ENCODE measurements at regions of chr10 and their contacts with region 1.

Region 1: GRCh38 chr10:93482145-93482834 is at the start of gene MYOF:
- H3K4me3 Mint-ChIP-seq: peak within 1 kb of the TSS; percentile 98
- H3K27ac Mint-ChIP-seq: peak within 1 kb of the TSS; percentile 96
- H3K4me1 Mint-ChIP-seq: peaks cover 27% of the 10 kb centered on the region
- H3K27me3 Mint-ChIP-seq: no peaks in the 10 kb centered on the region

Region 2: DNA sequence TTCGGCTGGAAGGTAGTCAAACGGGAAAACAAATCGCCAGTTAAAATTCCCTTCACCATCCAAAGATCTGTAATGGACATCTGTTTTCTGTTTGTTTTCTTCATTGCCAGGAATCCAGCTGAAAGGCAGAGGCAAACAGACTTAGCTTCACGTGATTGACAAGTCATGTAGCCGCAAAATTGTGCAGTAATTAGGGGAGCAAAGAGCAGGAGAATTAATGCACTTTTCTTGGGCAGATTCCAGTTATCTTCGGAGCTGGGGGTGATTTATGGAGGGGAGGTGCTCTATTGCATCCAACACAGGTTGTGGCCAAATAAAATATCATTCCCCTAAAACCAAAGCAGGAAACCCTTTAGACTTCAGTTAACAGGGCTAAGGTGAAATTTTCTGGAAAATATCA is 162.4 kb before region 1 on chr10:
- intact Hi-C with region 1: no loop called
- H3K4me3 Mint-ChIP-seq: no peak overlapping the region
- H3K27ac Mint-ChIP-seq: no peak overlapping the region
- H3K4me1 Mint-ChIP-seq: peaks cover 12% of the 10 kb centered on the region
- H3K27me3 Mint-ChIP-seq: no peaks in the 10 kb centered on the region

Region 3: DNA sequence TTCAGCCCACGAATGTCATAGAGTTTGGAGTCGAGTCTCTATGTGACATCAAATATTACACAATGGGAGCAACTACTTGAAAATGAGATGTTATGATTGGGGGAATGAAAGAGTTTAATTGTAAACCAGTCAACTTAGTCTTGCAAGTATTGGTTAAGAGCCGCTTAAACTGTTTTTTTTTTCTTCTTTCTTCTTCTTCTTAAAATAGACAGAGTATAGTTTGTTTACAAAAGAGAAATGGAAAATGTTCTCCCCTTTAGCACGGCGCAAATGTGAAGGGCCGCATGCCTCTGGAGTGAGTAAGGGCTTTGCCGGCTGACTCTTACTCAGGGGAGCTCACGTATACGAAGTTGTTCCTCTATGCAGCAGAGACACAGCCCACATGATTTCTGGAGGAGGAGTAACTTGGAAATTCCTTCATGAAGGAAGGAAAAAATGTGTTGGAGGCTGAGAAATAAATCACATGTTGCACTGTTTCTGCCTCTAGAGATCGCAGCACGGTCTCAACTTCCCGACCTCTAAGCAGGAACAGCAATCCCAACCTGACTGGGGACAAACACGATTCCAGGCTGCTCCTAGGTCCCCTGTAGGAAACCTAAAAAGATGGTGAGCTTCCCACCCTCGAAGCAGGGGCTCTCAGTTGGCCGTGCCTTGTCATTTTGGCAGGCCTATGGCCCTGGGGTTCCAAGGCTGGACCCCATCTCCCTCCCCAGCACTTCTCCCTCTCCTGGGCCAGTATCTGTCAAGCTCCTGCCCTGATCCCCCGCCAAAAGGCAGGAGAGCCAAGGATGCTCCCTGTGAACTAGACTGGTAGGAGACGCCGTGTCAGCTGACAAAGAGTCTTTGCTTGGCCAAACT is 45.0 kb before region 1 on chr10:
- intact Hi-C with region 1: loop called (anchors 5 kb)
- H3K4me3 Mint-ChIP-seq: no peak overlapping the region
- H3K27ac Mint-ChIP-seq: peak overlapping the region; percentile 26
- H3K4me1 Mint-ChIP-seq: peaks cover 62% of the 10 kb centered on the region
- H3K27me3 Mint-ChIP-seq: no peaks in the 10 kb centered on the region